ENCODE measurements at regions of chr17 and their contacts with region 1.

Region 1: DNA sequence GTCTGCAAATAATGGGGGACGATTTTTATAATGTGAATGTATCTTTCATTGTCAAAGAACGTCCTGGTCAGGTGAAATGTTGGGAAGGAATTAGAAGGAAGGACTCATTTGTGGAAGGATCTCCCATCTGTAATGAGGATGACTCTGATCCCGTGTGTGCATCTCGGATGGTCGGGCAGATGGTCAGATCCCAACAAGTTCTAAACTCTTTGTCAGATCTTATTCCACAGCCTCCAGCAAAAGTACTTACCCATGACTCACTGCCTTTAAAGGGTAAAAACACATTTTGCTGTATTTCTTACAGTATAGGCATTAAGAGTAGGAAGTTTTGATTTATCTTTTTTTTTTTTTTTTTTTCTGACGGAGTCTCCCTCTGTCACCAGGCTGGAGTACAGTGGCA is 534 bp upstream of the KRTAP4-8 start:
- DNase-seq: no peak
- ATAC-seq: no peak
- H3K4me3 ChIP-seq: no peak overlapping the region
- H3K4me3 Mint-ChIP-seq: no peak overlapping the region
- H3K27ac ChIP-seq: no peak overlapping the region
- H3K27ac Mint-ChIP-seq: no peak overlapping the region
- H3K4me1 ChIP-seq: no peaks in the 10 kb centered on the region
- H3K4me1 Mint-ChIP-seq: no peaks in the 10 kb centered on the region
- H3K27me3 ChIP-seq: no peaks in the 10 kb centered on the region
- H3K27me3 Mint-ChIP-seq: peaks cover 19 to 42% of the 10 kb centered on the region in 2 donors
- CTCF ChIP-seq: no peak

Region 2: GRCh38 chr17:41116297-41116696 is 17.8 kb after region 1 on chr17:
- intact Hi-C with region 1: loop called (anchors 1 kb)
- DNase-seq: no peak
- ATAC-seq: no peak
- H3K4me3 ChIP-seq: no peak overlapping the region
- H3K4me3 Mint-ChIP-seq: no peak overlapping the region
- H3K27ac ChIP-seq: no peak overlapping the region
- H3K27ac Mint-ChIP-seq: no peak overlapping the region
- H3K4me1 ChIP-seq: peaks cover 3% of the 10 kb centered on the region
- H3K4me1 Mint-ChIP-seq: peaks cover 9 to 11% of the 10 kb centered on the region in 2 donors
- H3K27me3 ChIP-seq: no peaks in the 10 kb centered on the region
- H3K27me3 Mint-ChIP-seq: peaks cover 15 to 51% of the 10 kb centered on the region in 2 donors
- CTCF ChIP-seq: no peak

Region 3: DNA sequence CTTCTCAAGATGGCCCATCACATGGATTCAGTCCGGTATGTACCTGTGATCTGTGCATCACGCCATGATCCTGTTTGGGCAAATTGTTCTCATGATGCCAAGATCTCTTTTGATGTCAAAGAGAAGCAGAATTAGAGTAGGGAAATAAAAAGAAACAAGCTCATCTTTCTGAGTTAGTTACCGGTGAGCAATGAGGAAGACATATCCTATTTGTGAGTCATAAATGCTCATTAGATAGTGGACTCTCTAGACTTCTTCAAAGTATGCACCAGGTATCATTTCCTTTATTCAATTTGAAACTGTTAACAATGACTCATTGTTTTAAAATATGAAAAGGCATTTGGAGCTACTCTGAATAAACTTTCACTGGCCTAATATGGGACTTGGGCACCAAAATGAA is 33.5 kb after region 1 on chr17:
- intact Hi-C with region 1: loop called (anchors 5 kb)
- DNase-seq: no peak
- ATAC-seq: no peak
- H3K4me3 ChIP-seq: no peak overlapping the region
- H3K4me3 Mint-ChIP-seq: no peak overlapping the region
- H3K27ac ChIP-seq: no peak overlapping the region
- H3K27ac Mint-ChIP-seq: no peak overlapping the region
- H3K4me1 ChIP-seq: no peaks in the 10 kb centered on the region
- H3K4me1 Mint-ChIP-seq: no peaks in the 10 kb centered on the region
- H3K27me3 ChIP-seq: no peaks in the 10 kb centered on the region
- H3K27me3 Mint-ChIP-seq: peaks cover 11% of the 10 kb centered on the region in 2 donors
- CTCF ChIP-seq: no peak

Measured in natural killer cell (primary cell).